OCI-LY7 (cell line): ENCODE measurements at regions of chr11 and their contacts with region 1.

Region 1: DNA sequence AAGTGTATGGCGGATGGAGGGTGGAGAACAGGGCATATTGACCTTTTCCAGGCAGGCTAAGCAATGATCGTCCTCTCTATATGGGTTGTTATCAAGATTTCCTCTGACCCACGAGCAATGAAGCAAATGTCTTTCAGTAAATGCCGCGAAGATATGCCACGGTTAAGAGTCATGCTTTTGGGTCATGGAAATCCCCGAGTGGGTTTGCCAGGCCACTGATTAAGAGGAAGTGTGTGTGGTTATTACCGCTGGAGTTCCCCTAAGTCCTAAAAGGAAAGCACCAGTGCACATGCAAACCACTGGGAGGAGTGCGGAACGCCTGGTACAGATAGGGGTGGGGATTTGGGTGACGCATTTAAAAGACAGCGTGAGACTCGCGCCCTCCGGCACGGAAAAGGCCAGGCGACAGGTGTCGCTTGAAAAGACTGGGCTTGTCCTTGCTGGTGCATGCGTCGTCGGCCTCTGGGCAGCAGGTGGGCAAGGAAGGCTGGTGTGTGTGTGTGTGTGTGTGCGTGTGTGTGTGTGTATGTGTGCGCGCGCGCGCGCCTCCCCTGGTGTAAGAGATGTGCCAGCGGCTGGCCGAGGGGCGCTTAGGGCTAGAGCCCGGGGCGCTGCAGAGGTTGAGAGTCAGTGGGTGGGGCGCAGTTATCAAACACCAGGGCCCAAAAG is at the start of gene BIRC3:
- DNase-seq: peak; percentile 98
- H3K4me3 ChIP-seq: peak within 1 kb of the TSS; percentile 91
- H3K27ac ChIP-seq: peak within 1 kb of the TSS; percentile 92
- H3K4me1 ChIP-seq: peaks cover 69% of the 10 kb centered on the region
- CTCF ChIP-seq: 0 out of 2 replicates have a peak, but pooled peaks have one; percentile 42
- total RNA-seq, gene BIRC3: 23.0 and 27.2 TPM in 2 replicates

Region 2: DNA sequence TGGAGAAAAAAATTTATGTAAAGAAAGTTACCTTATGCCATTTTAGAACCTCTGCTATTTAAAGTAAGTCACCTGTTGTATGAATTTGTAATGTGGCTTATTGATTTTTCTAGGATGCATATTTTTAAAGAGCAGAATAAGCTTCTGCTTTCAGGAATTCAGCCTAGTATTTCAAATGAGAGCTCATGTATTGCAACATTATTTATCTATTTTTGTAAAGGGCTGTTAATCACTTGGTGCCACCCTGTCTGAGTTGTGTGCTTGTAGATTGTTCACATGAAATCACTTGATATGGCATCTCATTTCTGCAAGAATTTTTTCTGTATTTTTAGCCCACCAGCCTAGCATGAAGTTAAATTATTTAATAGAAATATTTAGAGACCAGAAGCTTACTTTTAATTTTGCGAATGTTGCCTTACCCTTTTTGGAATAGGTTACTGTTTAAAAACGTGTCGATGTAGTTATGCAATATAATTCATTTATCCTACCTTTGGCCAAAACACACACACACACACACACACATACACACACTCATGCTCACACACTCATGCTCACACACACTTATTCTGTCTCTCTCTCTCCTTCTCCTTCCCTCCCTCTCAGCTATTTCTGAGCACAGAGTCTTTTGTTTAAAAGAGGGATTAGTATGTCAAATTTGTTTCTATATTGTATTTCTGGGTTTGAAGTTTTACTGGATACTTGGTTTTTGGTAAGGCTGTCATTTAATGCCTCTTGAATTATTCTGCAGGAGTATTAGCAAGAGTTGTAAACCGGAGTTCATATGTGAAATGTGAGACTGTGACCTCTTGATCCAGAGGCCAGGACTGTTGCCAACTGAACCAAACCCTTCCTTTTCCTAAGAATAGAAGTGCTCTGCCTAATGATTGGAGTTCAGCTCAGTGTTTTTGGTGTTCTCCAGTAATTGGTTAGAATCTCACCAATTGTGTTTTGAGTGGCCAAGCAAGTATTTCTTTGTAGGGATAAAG is 172.6 kb before region 1 on chr11:
- CTCF ChIA-PET with region 1: no interaction called
- POLR2A ChIA-PET with region 1: no interaction called
- intact Hi-C with region 1: no loop called
- DNase-seq: no peak
- H3K4me3 ChIP-seq: no peak overlapping the region
- H3K27ac ChIP-seq: no peak overlapping the region
- H3K4me1 ChIP-seq: no peaks in the 10 kb centered on the region
- CTCF ChIP-seq: no peak

Region 3: GRCh38 chr11:102287964-102288724 is 29.1 kb before region 1 on chr11:
- CTCF ChIA-PET with region 1: interaction called, 3 read pairs
- POLR2A ChIA-PET with region 1: interaction called, 102 read pairs
- intact Hi-C with region 1: loop called (anchors 1 kb)
- DNase-seq: peak; percentile 86
- H3K4me3 ChIP-seq: peak overlapping the region; percentile 36
- H3K27ac ChIP-seq: no peak overlapping the region
- H3K4me1 ChIP-seq: peaks cover 26% of the 10 kb centered on the region
- CTCF ChIP-seq: peak; percentile 93

Region 4: DNA sequence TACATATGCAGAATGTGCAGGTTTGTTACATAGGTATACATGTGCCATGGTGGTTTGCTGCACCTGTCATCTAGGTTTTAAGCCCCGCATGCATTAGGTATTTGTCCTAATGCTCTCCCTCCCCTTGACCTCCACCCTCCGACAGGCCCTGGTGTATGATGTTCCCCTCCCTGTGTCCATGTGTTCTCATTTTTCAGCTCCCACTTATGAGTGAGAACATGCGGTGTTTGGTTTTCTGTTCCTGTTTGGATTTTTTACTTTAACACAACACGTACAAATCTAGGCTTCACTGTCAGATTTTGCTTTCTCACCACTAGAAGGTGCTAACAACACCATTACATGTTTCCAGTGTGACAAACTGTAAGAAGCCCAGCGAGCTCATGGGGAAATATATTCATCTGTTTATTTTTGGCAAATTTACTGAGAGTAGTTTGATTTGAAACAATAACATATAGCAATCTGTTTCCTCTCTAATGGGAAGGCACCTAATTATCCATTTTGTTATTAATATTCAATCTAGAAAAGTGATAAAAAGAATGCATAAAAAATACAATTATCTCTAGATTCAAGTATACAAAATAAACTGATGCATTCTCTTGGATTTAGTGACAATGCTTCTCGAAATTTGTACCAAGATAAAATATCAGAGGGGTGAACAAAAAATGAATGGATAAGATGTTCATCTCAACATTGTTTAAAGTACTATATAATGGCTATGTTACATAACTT is 23.2 kb before region 1 on chr11:
- CTCF ChIA-PET with region 1: interaction called, 8 read pairs
- POLR2A ChIA-PET with region 1: interaction called, 102 read pairs
- intact Hi-C with region 1: loop called (anchors 1 kb)
- DNase-seq: peak; percentile 86
- H3K4me3 ChIP-seq: peak overlapping the region; percentile 37
- H3K27ac ChIP-seq: no peak overlapping the region
- H3K4me1 ChIP-seq: peaks cover 37% of the 10 kb centered on the region
- CTCF ChIP-seq: peak; percentile 93

Region 5: GRCh38 chr11:102306048-102306585 is 11.1 kb before region 1 on chr11:
- CTCF ChIA-PET with region 1: interaction called, 4 read pairs
- POLR2A ChIA-PET with region 1: interaction called, 76 read pairs
- intact Hi-C with region 1: no loop called
- DNase-seq: no peak
- H3K4me3 ChIP-seq: peak overlapping the region; percentile 39
- H3K27ac ChIP-seq: peak overlapping the region; percentile 82
- H3K4me1 ChIP-seq: peaks cover 40% of the 10 kb centered on the region
- CTCF ChIP-seq: peak; percentile 71

Region 6: GRCh38 chr11:102346748-102347461 is 29.7 kb after region 1 on chr11 and contains the start of gene BIRC2:
- CTCF ChIA-PET with region 1: interaction called, 4 read pairs
- POLR2A ChIA-PET with region 1: interaction called, 7 read pairs
- intact Hi-C with region 1: loop called (anchors 1 kb)
- DNase-seq: peak; percentile 95
- H3K4me3 ChIP-seq: peak within 1 kb of the TSS; percentile 76
- H3K27ac ChIP-seq: peak within 1 kb of the TSS; percentile 78
- H3K4me1 ChIP-seq: peaks cover 25% of the 10 kb centered on the region
- CTCF ChIP-seq: peak; percentile 75
- total RNA-seq, gene BIRC2: 32.6 and 38.0 TPM in 2 replicates

Region 7: GRCh38 chr11:102430158-102430836 is 113.1 kb after region 1 on chr11:
- CTCF ChIA-PET with region 1: no interaction called
- POLR2A ChIA-PET with region 1: interaction called, 4 read pairs
- intact Hi-C with region 1: loop called (anchors 1 kb)
- DNase-seq: peak; percentile 95
- H3K4me3 ChIP-seq: peak overlapping the region; percentile 51
- H3K27ac ChIP-seq: peak overlapping the region; percentile 98
- H3K4me1 ChIP-seq: peaks cover 66% of the 10 kb centered on the region
- CTCF ChIP-seq: 0 out of 2 replicates have a peak, but pooled peaks have one; percentile 39

Region 8: GRCh38 chr11:102451681-102452460 is 134.6 kb after region 1 on chr11:
- CTCF ChIA-PET with region 1: no interaction called
- POLR2A ChIA-PET with region 1: no interaction called
- intact Hi-C with region 1: loop called (anchors 1 kb)
- DNase-seq: peak; percentile 94
- H3K4me3 ChIP-seq: peak overlapping the region; percentile 95
- H3K27ac ChIP-seq: peak overlapping the region; percentile 88
- H3K4me1 ChIP-seq: peaks cover 63% of the 10 kb centered on the region
- CTCF ChIP-seq: peak; percentile 71